ENCODE measurements at regions of chr2 and their contacts with region 1.

Region 1: GRCh38 chr2:30686000-30686399 is 121.2 kb downstream of the CAPN13 start:
- DNase-seq: no peak
- ATAC-seq: peak; percentile 77
- H3K4me3 ChIP-seq: no peak overlapping the region
- H3K27ac ChIP-seq: no peak overlapping the region
- H3K4me1 ChIP-seq: no peaks in the 10 kb centered on the region
- H3K27me3 ChIP-seq: no peaks in the 10 kb centered on the region
- CTCF ChIP-seq: peak; percentile 66

Region 2: DNA sequence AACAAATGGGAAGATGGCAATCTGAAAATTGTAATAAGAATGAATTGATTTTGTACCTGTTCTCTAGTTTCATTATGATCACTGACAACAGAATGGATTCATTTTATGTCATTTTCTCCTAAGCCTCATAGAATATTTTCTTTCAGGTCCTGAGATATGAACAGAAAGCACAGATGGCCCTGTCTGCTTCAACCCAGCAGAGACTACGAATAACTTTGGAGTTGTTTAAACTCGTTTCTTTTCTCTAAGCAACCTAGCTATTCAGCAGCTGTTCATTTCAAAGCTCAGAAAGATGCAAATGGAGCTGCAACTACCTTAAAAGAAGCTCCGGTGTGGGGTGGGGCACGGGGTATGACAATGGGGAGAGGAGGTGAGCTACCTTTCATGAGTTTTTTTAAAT is 889.6 kb before region 1 on chr2:
- CTCF ChIA-PET with region 1: no interaction called
- POLR2A ChIA-PET with region 1: no interaction called
- in situ Hi-C with region 1: no loop called
- intact Hi-C with region 1: no loop called
- DNase-seq: no peak
- ATAC-seq: no peak
- H3K4me3 ChIP-seq: no peak overlapping the region
- H3K27ac ChIP-seq: no peak overlapping the region
- H3K4me1 ChIP-seq: no peaks in the 10 kb centered on the region
- H3K27me3 ChIP-seq: peaks cover 2% of the 10 kb centered on the region; the same call in 1 of the 2 replicates
- CTCF ChIP-seq: no peak

Region 3: DNA sequence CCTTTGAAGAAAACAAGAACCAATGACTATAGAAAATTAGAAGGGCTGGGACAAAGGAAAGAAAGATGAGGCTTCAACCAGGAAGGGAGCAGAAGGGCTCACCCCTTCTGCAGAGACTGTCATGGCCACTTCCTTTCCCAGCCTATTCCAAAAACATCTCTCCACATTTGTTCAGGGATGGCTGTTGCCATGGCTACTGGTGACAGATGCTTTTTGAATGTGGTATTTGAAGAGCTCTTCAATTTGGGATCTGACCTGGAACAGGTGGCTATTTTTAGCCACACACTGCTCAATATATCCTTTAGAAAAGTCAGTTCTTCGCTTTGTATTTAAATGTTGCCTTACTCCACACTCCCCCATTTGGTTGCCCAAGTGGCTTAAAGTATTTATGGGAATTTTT is 303.0 kb before region 1 on chr2:
- CTCF ChIA-PET with region 1: interaction called, 10 read pairs
- POLR2A ChIA-PET with region 1: no interaction called
- in situ Hi-C with region 1: no loop called
- intact Hi-C with region 1: no loop called
- DNase-seq: no peak
- ATAC-seq: no peak
- H3K4me3 ChIP-seq: no peak overlapping the region
- H3K27ac ChIP-seq: no peak overlapping the region
- H3K4me1 ChIP-seq: no peaks in the 10 kb centered on the region
- H3K27me3 ChIP-seq: peaks cover 10% of the 10 kb centered on the region
- CTCF ChIP-seq: no peak

Region 4: GRCh38 chr2:30809938-30810714 is 124.1 kb after region 1 on chr2:
- CTCF ChIA-PET with region 1: no interaction called
- POLR2A ChIA-PET with region 1: no interaction called
- in situ Hi-C with region 1: no loop called
- intact Hi-C with region 1: no loop called
- DNase-seq: no peak
- ATAC-seq: no peak
- H3K4me3 ChIP-seq: no peak overlapping the region
- H3K27ac ChIP-seq: no peak overlapping the region
- H3K4me1 ChIP-seq: no peaks in the 10 kb centered on the region
- H3K27me3 ChIP-seq: peaks cover 2% of the 10 kb centered on the region; the same call in 1 of the 2 replicates
- CTCF ChIP-seq: no peak